Activated T-helper 1 cell treated with anti-CD3 and anti-CD28 coated beads, Interleukin-12 subunit alpha, Interleukin-12 subunit beta, Interleukin-2, Interleukin-4 antibody, amounts not matched to agents 30 ng/mL and 10 ng/mL and 1 ng/mL, durations not matched to agents 14 hours and 24 hours and 36 hours (primary cell): ENCODE measurements at regions of chr12 and their contacts with region 1.

Region 1: DNA sequence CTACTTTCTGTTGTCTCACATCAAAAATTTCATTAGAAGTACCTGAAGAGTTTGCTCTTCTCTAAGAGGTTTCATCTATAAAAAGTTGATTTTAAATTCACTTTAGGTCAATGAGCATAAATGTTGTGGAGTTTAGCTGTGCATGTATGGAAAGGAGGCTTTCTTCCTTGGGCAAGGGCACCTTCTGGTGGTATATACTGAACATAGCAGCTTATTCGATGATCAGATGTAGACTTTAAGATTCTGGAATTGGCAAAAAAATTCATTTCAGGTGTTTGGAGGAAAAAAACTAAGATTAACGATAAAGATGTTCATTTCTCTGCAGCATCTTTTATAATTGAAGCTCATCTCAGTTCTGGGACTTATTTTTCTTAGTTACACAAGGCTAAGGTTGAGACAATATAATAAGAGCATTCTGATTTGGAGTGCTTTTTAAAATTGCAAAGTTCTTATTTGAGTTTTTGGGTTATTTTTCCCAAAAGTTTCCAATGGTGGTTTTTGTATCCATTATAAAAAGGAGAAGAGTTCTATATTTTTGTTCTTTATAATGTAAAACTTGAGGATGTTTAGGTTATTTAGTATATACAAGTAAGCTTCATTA is 46.8 kb downstream of the TMEM117 start:
- DNase-seq: no peak
- H3K4me3 Mint-ChIP-seq: no peak overlapping the region
- H3K27ac Mint-ChIP-seq: no peak overlapping the region
- H3K4me1 Mint-ChIP-seq: no peaks in the 10 kb centered on the region
- H3K27me3 Mint-ChIP-seq: peaks cover 6% of the 10 kb centered on the region

Region 2: GRCh38 chr12:43444940-43445564 is 437.6 kb before region 1 on chr12:
- intact Hi-C with region 1: loop called (anchors 1 kb)
- DNase-seq: no peak
- H3K4me3 Mint-ChIP-seq: no peak overlapping the region
- H3K27ac Mint-ChIP-seq: no peak overlapping the region
- H3K4me1 Mint-ChIP-seq: no peaks in the 10 kb centered on the region
- H3K27me3 Mint-ChIP-seq: no peaks in the 10 kb centered on the region

Region 3: GRCh38 chr12:43676183-43676813 is 206.4 kb before region 1 on chr12:
- intact Hi-C with region 1: loop called (anchors 1 kb)
- DNase-seq: no peak
- H3K4me3 Mint-ChIP-seq: no peak overlapping the region
- H3K27ac Mint-ChIP-seq: no peak overlapping the region
- H3K4me1 Mint-ChIP-seq: no peaks in the 10 kb centered on the region
- H3K27me3 Mint-ChIP-seq: peaks cover 14% of the 10 kb centered on the region

Region 4: GRCh38 chr12:43776498-43776897 is 106.2 kb before region 1 on chr12:
- intact Hi-C with region 1: loop called (anchors 1 kb)
- DNase-seq: no peak
- H3K4me3 Mint-ChIP-seq: no peak overlapping the region
- H3K27ac Mint-ChIP-seq: no peak overlapping the region
- H3K4me1 Mint-ChIP-seq: peaks cover 6% of the 10 kb centered on the region
- H3K27me3 Mint-ChIP-seq: no peaks in the 10 kb centered on the region

Region 5: GRCh38 chr12:43835656-43836474 is 46.8 kb before region 1 on chr12 and contains the start of gene TMEM117:
- intact Hi-C with region 1: loop called (anchors 5 kb)
- DNase-seq: peak; percentile 42
- H3K4me3 Mint-ChIP-seq: peak within 1 kb of the TSS; percentile 78
- H3K27ac Mint-ChIP-seq: peak within 1 kb of the TSS; percentile 64
- H3K4me1 Mint-ChIP-seq: peaks cover 37% of the 10 kb centered on the region
- H3K27me3 Mint-ChIP-seq: peaks cover 19% of the 10 kb centered on the region
- total RNA-seq, gene TMEM117: 1.1 and 2.2 TPM in 2 replicates

Region 6: GRCh38 chr12:44229846-44230245 is 347.2 kb after region 1 on chr12:
- intact Hi-C with region 1: no loop called
- DNase-seq: no peak
- H3K4me3 Mint-ChIP-seq: no peak overlapping the region
- H3K27ac Mint-ChIP-seq: no peak overlapping the region
- H3K4me1 Mint-ChIP-seq: no peaks in the 10 kb centered on the region
- H3K27me3 Mint-ChIP-seq: no peaks in the 10 kb centered on the region